ENCODE measurements at regions of chr1 and their contacts with region 1.

Region 1: GRCh38 chr1:188089461-188089860 is 1260.7 kb downstream of the PLA2G4A start:
- DNase-seq: peak; percentile 39
- H3K4me3 ChIP-seq: no peak overlapping the region
- H3K27ac ChIP-seq: peak overlapping the region; percentile 38
- H3K4me1 ChIP-seq: peaks cover 16% of the 10 kb centered on the region
- H3K27me3 ChIP-seq: no peaks in the 10 kb centered on the region
- CTCF ChIP-seq: no peak
- POLR2A ChIP-seq: no peak

Region 2: DNA sequence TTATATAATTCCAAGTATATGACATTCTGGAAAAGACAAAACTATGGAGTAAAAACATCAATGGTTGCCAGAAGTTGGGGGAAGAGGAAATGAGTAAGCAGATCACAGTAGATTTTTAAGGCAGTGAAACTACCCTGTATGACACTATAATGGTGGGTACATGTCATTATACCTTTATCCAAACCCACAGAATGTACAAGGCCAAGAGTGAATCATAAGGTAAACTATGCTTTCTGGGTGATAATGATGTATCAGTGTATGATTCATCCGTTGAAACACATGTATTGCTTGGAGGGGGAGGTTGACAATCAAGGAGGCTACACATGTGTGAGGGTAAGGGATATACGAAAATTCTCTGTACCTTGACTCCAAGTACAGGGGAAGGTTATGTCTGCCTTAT is 398.0 kb before region 1 on chr1:
- CTCF ChIA-PET with region 1: no interaction called
- POLR2A ChIA-PET with region 1: no interaction called
- dilution Hi-C with region 1: no loop called
- intact Hi-C with region 1: loop called (anchors 5 kb)
- DNase-seq: peak; percentile 86
- H3K4me3 ChIP-seq: no peak overlapping the region
- H3K27ac ChIP-seq: no peak overlapping the region
- H3K4me1 ChIP-seq: peaks cover 10% of the 10 kb centered on the region
- H3K27me3 ChIP-seq: no peaks in the 10 kb centered on the region
- CTCF ChIP-seq: no peak
- POLR2A ChIP-seq: peak; percentile 51

Region 3: GRCh38 chr1:187817782-187818181 is 271.7 kb before region 1 on chr1:
- CTCF ChIA-PET with region 1: no interaction called
- POLR2A ChIA-PET with region 1: no interaction called
- dilution Hi-C with region 1: no loop called
- intact Hi-C with region 1: no loop called
- DNase-seq: no peak
- H3K4me3 ChIP-seq: no peak overlapping the region
- H3K27ac ChIP-seq: no peak overlapping the region
- H3K4me1 ChIP-seq: no peaks in the 10 kb centered on the region
- H3K27me3 ChIP-seq: no peaks in the 10 kb centered on the region
- CTCF ChIP-seq: peak in 1 of 2 donors; percentile 1
- POLR2A ChIP-seq: no peak

Region 4: DNA sequence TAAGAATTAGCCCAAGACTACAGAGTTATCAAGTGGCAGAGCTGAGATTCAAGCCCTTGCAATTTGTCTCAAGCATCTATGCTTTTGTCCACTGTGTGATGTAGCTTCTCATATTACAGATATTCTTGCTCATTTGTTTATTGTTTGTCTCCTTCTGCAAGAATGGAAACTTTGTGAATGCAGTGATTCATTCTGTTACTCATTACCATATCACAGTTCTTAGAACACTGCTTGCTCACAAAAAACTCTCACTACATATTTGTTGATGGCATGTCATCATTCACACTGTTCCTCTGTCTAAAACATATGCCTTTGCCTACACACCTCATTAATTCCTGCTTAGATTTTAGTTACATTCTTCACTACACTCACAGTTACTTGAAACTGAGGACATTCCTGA is 61.8 kb before region 1 on chr1:
- CTCF ChIA-PET with region 1: no interaction called
- POLR2A ChIA-PET with region 1: no interaction called
- dilution Hi-C with region 1: no loop called
- intact Hi-C with region 1: loop called (anchors 1 kb)
- DNase-seq: peak; percentile 94
- H3K4me3 ChIP-seq: no peak overlapping the region
- H3K27ac ChIP-seq: peak overlapping the region; percentile 94
- H3K4me1 ChIP-seq: peaks cover 25% of the 10 kb centered on the region
- H3K27me3 ChIP-seq: no peaks in the 10 kb centered on the region
- CTCF ChIP-seq: no peak
- POLR2A ChIP-seq: peak; percentile 28

Region 5: GRCh38 chr1:188128761-188129160 is 39.3 kb after region 1 on chr1:
- CTCF ChIA-PET with region 1: no interaction called
- POLR2A ChIA-PET with region 1: no interaction called
- dilution Hi-C with region 1: no loop called
- intact Hi-C with region 1: loop called (anchors 5 kb)
- DNase-seq: peak; percentile 17
- H3K4me3 ChIP-seq: no peak overlapping the region
- H3K27ac ChIP-seq: no peak overlapping the region
- H3K4me1 ChIP-seq: no peaks in the 10 kb centered on the region
- H3K27me3 ChIP-seq: no peaks in the 10 kb centered on the region
- CTCF ChIP-seq: peak in 1 of 2 donors; percentile 8
- POLR2A ChIP-seq: no peak

Region 6: GRCh38 chr1:188706742-188707141 is 617.3 kb after region 1 on chr1:
- CTCF ChIA-PET with region 1: interaction called, 3 read pairs
- POLR2A ChIA-PET with region 1: no interaction called
- dilution Hi-C with region 1: no loop called
- intact Hi-C with region 1: loop called (anchors 1 kb)
- DNase-seq: peak; percentile 94
- H3K4me3 ChIP-seq: no peak overlapping the region
- H3K27ac ChIP-seq: peak overlapping the region; percentile 93
- H3K4me1 ChIP-seq: peaks cover 25% of the 10 kb centered on the region
- H3K27me3 ChIP-seq: no peaks in the 10 kb centered on the region
- CTCF ChIP-seq: peak; percentile 20 to 26
- POLR2A ChIP-seq: no peak

Measured in endothelial cell of umbilical vein (primary cell).